ENCODE measurements at regions of chr17 and their contacts with region 1.

Region 1: DNA sequence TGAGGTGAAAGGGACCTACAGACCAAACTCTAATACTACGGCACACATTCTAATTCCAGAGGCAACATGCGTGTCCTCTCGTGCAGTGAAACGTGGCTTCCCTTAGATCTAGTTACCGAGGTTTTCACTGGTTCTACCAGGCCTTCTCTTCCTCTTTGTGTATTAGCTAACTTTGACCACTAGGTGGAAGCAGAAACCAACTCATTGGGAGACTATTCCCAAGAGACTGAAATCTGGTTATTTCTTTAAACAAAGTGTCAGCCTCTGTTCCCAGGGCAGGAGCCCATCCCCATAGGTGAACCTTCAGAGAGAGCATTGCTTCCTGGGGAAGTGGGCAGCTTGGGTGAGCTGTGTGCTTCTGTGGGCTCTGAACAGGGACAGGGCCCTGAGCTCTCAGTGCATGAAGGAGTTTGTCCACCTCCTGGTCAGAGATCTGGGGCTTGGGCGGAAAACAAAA is 19.7 kb upstream of the RCVRN start:
- DNase-seq: no peak
- H3K4me3 ChIP-seq: no peak overlapping the region
- H3K27ac ChIP-seq: no peak overlapping the region
- H3K4me1 ChIP-seq: no peaks in the 10 kb centered on the region
- H3K27me3 ChIP-seq: no peaks in the 10 kb centered on the region
- CTCF ChIP-seq: peak; percentile 71

Region 2: GRCh38 chr17:9987779-9988574 is 63.2 kb after region 1 on chr17:
- intact Hi-C with region 1: loop called (anchors 10 kb)
- DNase-seq: peak; percentile 37
- H3K4me3 ChIP-seq: no peak overlapping the region
- H3K27ac ChIP-seq: no peak overlapping the region
- H3K4me1 ChIP-seq: no peaks in the 10 kb centered on the region
- H3K27me3 ChIP-seq: no peaks in the 10 kb centered on the region
- CTCF ChIP-seq: peak; percentile 67

Region 3: DNA sequence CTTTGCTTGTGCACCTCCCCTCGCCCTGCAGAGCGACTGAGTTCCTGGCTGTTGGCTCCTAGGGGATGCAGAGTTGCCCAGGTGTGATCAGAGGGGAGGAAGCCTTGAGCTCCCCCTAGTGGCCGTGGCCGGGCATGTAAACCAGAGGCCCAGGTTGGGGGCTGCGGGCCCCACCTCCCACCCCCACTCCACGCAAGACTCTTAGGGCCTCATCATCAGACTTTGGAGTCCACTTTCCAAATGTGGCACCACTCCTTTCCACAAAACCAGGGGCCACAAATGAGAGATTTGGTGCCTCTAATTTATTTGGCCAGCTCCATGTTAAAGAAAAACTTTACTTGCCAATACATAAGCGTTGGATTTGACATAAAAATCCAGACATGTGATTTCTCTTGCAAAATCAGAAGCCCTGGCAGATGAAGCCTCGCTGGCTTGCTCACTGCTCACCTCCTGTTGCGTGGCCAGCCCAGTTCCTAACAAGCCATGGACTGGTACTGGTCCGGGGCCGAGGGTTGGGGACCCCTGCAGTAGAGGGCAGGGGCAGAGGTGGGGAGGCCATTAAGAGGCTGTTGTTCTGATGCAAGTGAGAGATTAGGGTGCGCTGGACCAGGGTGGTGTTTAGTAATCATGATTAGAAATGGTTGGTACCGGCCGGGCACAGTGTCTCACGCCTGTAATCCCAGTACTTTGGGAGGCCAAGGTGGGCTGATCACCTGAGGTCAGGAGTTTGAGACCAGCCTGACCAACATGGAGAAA is 302.3 kb after region 1 on chr17:
- intact Hi-C with region 1: loop called (anchors 5 kb)
- DNase-seq: peak; percentile 45
- H3K4me3 ChIP-seq: no peak overlapping the region
- H3K27ac ChIP-seq: no peak overlapping the region
- H3K4me1 ChIP-seq: no peaks in the 10 kb centered on the region
- H3K27me3 ChIP-seq: no peaks in the 10 kb centered on the region
- CTCF ChIP-seq: peak; percentile 89

Region 4: GRCh38 chr17:10618202-10618635 is 693.5 kb after region 1 on chr17:
- intact Hi-C with region 1: loop called (anchors 10 kb)
- DNase-seq: peak; percentile 72
- H3K4me3 ChIP-seq: no peak overlapping the region
- H3K27ac ChIP-seq: no peak overlapping the region
- H3K4me1 ChIP-seq: no peaks in the 10 kb centered on the region
- H3K27me3 ChIP-seq: no peaks in the 10 kb centered on the region
- CTCF ChIP-seq: peak; percentile 89